Gastrocnemius medialis (tissue), 4 donors: ENCODE measurements at regions of chrX and their contacts with region 1.

Region 1: GRCh38 chrX:36116222-36116621 is 196.7 kb downstream of the CFAP47 start:
- DNase-seq: no peak
- ATAC-seq: no peak
- H3K4me3 ChIP-seq: no peak overlapping the region
- H3K27ac ChIP-seq: no peak overlapping the region
- H3K4me1 ChIP-seq: no peaks in the 10 kb centered on the region
- H3K27me3 ChIP-seq: no peaks in the 10 kb centered on the region
- CTCF ChIP-seq: no peak
- POLR2A ChIP-seq: no peak

Region 2: GRCh38 chrX:36062778-36063177 is 53.4 kb before region 1 on chrX:
- in situ Hi-C with region 1: loop called in 1 of 4 experiments (anchors 5 kb)
- intact Hi-C with region 1: no loop called
- DNase-seq: no peak
- ATAC-seq: no peak
- H3K4me3 ChIP-seq: no peak overlapping the region
- H3K27ac ChIP-seq: no peak overlapping the region
- H3K4me1 ChIP-seq: no peaks in the 10 kb centered on the region
- H3K27me3 ChIP-seq: no peaks in the 10 kb centered on the region
- CTCF ChIP-seq: no peak
- POLR2A ChIP-seq: no peak